ENCODE measurements at regions of chr1 and their contacts with region 1.

Region 1: GRCh38 chr1:239898062-239898730 is 193.5 kb upstream of the FMN2 start:
- DNase-seq: peak; percentile 50 to 71 (median 67)
- H3K4me3 ChIP-seq: no peak overlapping the region
- H3K4me3 Mint-ChIP-seq: peak overlapping the region in 1 of 8 donors; percentile 1
- H3K27ac ChIP-seq: no peak overlapping the region
- H3K27ac Mint-ChIP-seq: no peak overlapping the region
- H3K4me1 ChIP-seq: no peaks in the 10 kb centered on the region
- H3K4me1 Mint-ChIP-seq: peaks cover 0 to 3% (median under 1%) of the 10 kb centered on the region in 4 donors
- H3K27me3 ChIP-seq: no peaks in the 10 kb centered on the region
- H3K27me3 Mint-ChIP-seq: peaks cover 2 to 3% of the 10 kb centered on the region in 2 donors

Region 2: DNA sequence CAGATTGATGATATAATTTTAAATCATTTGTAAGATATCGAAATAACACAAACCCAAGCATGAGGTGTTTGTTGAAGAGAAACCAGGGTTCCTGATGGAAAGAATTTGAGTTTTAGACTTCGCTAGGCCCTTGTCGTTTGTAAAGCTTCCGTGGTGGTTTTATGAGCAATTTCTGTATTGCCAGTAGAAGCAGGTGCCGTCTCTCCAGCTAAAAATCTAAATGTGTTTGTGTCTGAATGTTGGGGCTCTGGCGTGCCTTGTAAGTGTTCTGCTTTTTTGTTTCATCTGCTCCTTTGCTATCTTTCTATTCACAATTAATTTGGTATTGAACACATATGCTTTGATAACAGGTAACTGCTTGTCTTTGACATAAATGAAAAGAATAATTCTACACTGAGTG is 484.3 kb before region 1 on chr1:
- CTCF ChIA-PET with region 1: interaction called, 13 read pairs
- POLR2A ChIA-PET with region 1: no interaction called
- intact Hi-C with region 1: no loop called
- DNase-seq: no peak
- H3K4me3 ChIP-seq: no peak overlapping the region
- H3K4me3 Mint-ChIP-seq: no peak overlapping the region
- H3K27ac ChIP-seq: no peak overlapping the region
- H3K27ac Mint-ChIP-seq: peak overlapping the region in 1 of 7 donors; percentile 3
- H3K4me1 ChIP-seq: no peaks in the 10 kb centered on the region
- H3K4me1 Mint-ChIP-seq: no peaks in the 10 kb centered on the region
- H3K27me3 ChIP-seq: no peaks in the 10 kb centered on the region
- H3K27me3 Mint-ChIP-seq: no peaks in the 10 kb centered on the region

Region 3: GRCh38 chr1:239587066-239587465 is 311.1 kb before region 1 on chr1:
- CTCF ChIA-PET with region 1: interaction called, 13 read pairs
- POLR2A ChIA-PET with region 1: no interaction called
- intact Hi-C with region 1: loop called (anchors 1 kb)
- DNase-seq: peak; percentile 45 to 59 (median 50)
- H3K4me3 ChIP-seq: no peak overlapping the region
- H3K4me3 Mint-ChIP-seq: peak overlapping the region in 3 of 8 donors; percentile 14 to 34 (median 28)
- H3K27ac ChIP-seq: no peak overlapping the region
- H3K27ac Mint-ChIP-seq: peak overlapping the region in 4 of 7 donors; percentile 43 to 77 (median 62)
- H3K4me1 ChIP-seq: peaks cover 8% of the 10 kb centered on the region
- H3K4me1 Mint-ChIP-seq: peaks cover 5 to 11% (median 7%) of the 10 kb centered on the region in 4 donors
- H3K27me3 ChIP-seq: no peaks in the 10 kb centered on the region
- H3K27me3 Mint-ChIP-seq: peaks cover 0 to 3% of the 10 kb centered on the region in 2 donors

Region 4: DNA sequence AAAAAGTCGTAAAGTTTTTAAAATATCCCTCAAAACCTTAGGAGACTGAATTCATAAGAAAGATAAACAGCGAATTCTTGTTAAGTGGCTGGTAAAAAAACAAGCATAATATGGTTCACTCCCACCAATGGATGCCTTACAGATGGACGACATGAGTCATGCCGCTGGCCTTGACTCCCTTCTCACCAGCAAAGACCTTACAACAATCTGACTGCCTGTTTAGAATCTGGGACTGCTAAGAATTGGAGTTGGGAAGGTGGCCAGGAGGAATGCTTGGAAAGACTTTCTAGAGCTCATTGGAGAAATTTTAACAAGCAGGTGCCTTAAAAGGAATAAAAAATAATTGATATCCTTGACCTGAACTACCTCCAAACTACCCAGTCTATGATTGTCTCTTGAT is 13.4 kb before region 1 on chr1:
- CTCF ChIA-PET with region 1: interaction called, 17 read pairs
- POLR2A ChIA-PET with region 1: no interaction called
- intact Hi-C with region 1: no loop called
- DNase-seq: no peak
- H3K4me3 ChIP-seq: no peak overlapping the region
- H3K4me3 Mint-ChIP-seq: no peak overlapping the region
- H3K27ac ChIP-seq: no peak overlapping the region
- H3K27ac Mint-ChIP-seq: no peak overlapping the region
- H3K4me1 ChIP-seq: no peaks in the 10 kb centered on the region
- H3K4me1 Mint-ChIP-seq: no peaks in the 10 kb centered on the region
- H3K27me3 ChIP-seq: no peaks in the 10 kb centered on the region
- H3K27me3 Mint-ChIP-seq: no peaks in the 10 kb centered on the region